ENCODE measurements at regions of chr19 and their contacts with region 1.

Region 1: DNA sequence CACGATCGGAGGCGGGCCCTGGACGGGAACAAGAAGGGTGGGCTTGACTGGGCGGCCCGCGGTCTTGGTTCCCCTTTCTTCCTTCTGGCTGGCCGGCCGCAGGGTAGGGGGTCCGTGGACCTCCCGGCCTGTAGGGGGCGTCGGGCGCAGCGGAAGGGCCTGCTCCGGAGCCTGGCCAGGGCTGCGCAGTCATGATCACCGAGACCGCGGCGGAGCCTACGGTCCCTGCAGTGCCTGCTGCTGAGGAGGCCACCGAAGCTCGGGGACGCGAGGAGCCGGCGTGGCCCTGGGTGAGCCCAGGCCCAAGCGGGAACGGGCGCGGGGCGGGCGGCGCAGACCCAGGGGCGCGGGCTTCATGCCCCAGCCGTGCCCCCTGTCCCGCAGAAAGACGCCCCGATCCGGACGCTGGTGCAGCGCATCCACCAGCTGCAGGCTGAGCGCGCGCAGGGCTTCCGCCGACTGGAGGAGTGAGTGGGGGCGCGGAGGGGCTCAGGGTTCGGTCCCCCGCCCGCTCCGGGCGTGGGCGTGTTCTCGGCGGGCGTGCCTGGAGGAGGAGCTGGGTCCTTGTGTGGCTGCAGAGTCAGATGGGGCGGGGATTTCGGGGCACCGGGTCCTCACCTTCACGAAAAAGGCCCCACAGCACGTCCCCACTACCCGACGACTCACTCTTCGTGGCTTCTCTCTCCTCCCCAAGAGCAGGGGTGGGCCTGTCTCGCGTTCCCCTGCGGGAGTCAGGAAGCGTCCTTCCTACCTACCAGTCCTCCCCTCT is at the start of gene REX1BD:
- DNase-seq: no peak
- H3K4me3 ChIP-seq: peak within 1 kb of the TSS; percentile 72
- CTCF ChIP-seq: peak; percentile 97

Region 2: GRCh38 chr19:18456974-18457373 is 131.8 kb before region 1 on chr19:
- CTCF ChIA-PET with region 1: interaction called, 20 read pairs
- POLR2A ChIA-PET with region 1: no interaction called
- DNase-seq: no peak
- H3K4me3 ChIP-seq: no peak overlapping the region
- CTCF ChIP-seq: no peak

Region 3: GRCh38 chr19:18571564-18572300 is 17.1 kb before region 1 on chr19 and contains the start of gene UBA52:
- CTCF ChIA-PET with region 1: interaction called, 53 read pairs
- POLR2A ChIA-PET with region 1: interaction called, 8 read pairs
- DNase-seq: peak; percentile 62
- H3K4me3 ChIP-seq: peak within 1 kb of the TSS; percentile 96
- CTCF ChIP-seq: no peak

Region 4: DNA sequence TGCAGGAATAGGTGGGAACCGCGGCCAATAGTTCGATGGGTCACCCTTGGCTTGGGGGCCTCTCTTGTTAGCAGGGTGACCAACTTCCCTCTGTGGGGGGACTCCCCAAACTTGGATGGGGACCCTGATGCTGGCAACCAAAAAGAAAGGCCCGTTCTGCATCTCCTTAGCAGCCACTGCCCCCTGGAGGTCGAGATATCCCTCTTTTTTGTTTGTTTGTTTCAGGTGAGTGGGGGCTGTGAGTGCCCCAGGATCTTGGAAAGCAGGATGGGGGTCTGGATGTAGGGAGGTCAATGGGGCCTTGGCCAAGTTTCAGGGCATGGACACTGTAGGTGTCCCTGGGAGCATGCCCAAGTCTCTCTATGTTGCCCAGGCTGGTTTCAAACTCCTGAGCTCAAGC is 87.0 kb after region 1 on chr19:
- CTCF ChIA-PET with region 1: interaction called, 11 read pairs
- POLR2A ChIA-PET with region 1: no interaction called
- DNase-seq: no peak
- H3K4me3 ChIP-seq: no peak overlapping the region
- CTCF ChIP-seq: peak; percentile 31

Region 5: DNA sequence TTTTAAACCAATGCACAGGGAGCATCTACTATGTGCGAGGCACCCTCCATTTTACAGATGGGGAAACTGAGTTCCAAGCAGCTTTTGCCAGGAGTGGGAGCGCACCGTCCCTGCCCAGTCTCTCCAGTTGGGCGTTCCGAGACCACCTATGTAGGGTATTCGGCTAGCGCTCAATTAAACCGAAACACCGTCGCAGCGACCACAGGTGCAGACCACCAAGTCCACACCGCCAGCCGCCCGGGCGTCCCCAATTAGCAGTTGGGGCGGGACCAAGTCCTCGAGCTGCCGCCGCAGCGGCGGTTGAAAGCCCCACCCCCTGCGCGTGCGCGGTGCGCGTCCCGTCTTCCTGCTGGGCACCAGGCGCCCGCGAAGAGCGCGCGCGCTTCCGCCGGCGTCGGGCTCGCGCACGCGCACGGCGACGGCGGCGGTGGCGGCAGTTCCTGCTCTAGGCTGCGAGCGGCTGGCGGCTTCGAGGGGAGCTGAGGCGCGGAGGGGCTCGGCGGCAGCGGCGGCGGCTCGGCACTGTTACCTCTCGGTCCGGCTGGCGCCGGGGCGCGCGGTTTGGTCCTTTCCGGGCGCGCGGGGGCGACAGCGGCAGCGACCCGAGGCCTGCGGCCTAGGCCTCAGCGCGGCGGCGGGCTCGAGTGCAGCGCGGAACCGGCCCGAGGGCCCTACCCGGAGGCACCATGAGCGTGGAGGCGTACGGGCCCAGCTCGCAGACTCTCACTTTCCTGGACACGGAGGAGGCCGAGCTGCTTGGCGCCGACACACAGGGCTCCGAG is 242.9 kb after region 1 on chr19 and contains the start of gene UPF1:
- CTCF ChIA-PET with region 1: interaction called, 16 read pairs
- POLR2A ChIA-PET with region 1: interaction called, 5 read pairs
- DNase-seq: no peak
- H3K4me3 ChIP-seq: peak within 1 kb of the TSS; percentile 87
- CTCF ChIP-seq: no peak

Region 6: DNA sequence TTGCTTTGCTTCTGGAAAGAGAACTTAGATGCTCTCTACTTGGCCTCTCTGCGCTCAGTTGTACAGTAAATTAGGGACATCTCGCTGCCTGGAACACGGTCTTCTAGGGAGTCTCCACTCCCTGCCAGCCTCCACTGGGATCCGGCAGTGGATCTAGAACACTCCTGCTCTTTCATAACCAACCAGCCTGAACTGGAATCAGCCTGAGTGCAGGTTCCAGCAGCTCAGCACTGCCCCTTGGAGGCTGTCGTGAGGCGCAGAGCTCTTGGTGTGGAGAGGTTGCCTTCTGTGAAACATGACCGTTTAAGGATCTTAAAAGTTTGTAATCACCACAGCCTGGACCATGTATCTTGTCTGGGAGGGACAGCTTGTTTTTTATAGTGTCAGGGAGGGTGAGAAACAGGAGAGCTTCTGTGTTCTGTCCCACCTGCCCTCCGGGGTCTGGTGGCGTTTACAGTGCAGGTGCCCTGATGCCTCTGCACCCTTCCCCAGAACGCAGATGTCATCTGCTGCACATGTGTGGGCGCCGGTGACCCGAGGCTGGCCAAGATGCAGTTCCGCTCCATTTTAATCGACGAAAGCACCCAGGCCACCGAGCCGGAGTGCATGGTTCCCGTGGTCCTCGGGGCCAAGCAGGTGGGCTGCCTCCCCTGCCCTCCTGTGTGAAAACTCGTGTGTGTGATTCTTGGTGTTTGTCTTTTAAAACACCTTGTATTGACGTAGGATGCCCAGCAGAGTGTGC is 267.8 kb after region 1 on chr19:
- CTCF ChIA-PET with region 1: interaction called, 286 read pairs
- POLR2A ChIA-PET with region 1: interaction called, 3 read pairs
- DNase-seq: no peak
- H3K4me3 ChIP-seq: no peak overlapping the region
- CTCF ChIP-seq: peak; percentile 51